AG04449 (cell line): ENCODE measurements at regions of chr11 and their contacts with region 1.

Region 1: GRCh38 chr11:65329944-65330403 is 3.7 kb upstream of the DPF2 start:
- DNase-seq: peak; percentile 61
- H3K4me3 ChIP-seq: no peak overlapping the region
- CTCF ChIP-seq: peak; percentile 66

Region 2: GRCh38 chr11:65204646-65205601 is 125.0 kb before region 1 on chr11:
- CTCF ChIA-PET with region 1: interaction called, 15 read pairs
- POLR2A ChIA-PET with region 1: no interaction called
- DNase-seq: no peak
- H3K4me3 ChIP-seq: no peak overlapping the region
- CTCF ChIP-seq: peak; percentile 88

Region 3: GRCh38 chr11:65274735-65275682 is 55.0 kb before region 1 on chr11:
- CTCF ChIA-PET with region 1: interaction called, 1,993 read pairs
- POLR2A ChIA-PET with region 1: interaction called, 11 read pairs
- DNase-seq: peak; percentile 92
- H3K4me3 ChIP-seq: no peak overlapping the region
- CTCF ChIP-seq: peak; percentile 69

Region 4: DNA sequence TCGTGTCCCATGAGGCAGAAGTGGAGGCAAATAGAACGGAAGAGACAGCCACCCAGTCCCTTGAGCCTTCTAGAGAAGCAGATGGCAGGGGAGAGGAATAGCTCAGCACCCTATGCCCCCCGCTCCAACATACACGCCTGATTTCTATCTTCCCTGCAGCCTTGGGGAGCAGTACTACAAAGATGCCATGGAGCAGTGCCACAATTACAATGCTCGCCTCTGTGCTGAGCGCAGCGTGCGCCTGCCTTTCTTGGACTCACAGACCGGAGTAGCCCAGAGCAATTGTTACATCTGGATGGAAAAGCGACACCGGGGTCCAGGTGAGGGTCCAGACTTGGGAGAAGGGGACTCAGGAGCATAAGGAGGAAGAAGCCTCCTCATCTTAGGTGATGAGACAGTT is 10.3 kb after region 1 on chr11:
- CTCF ChIA-PET with region 1: interaction called, 52 read pairs
- POLR2A ChIA-PET with region 1: no interaction called
- DNase-seq: no peak
- H3K4me3 ChIP-seq: no peak overlapping the region
- CTCF ChIP-seq: no peak

Region 5: GRCh38 chr11:65354265-65355012 is 24.5 kb after region 1 on chr11 and contains the start of gene TIGD3:
- CTCF ChIA-PET with region 1: interaction called, 15 read pairs
- POLR2A ChIA-PET with region 1: interaction called, 7 read pairs
- DNase-seq: no peak
- H3K4me3 ChIP-seq: peak within 1 kb of the TSS; percentile 65
- CTCF ChIP-seq: no peak